ENCODE measurements at regions of chr19 and their contacts with region 1.

Region 1: DNA sequence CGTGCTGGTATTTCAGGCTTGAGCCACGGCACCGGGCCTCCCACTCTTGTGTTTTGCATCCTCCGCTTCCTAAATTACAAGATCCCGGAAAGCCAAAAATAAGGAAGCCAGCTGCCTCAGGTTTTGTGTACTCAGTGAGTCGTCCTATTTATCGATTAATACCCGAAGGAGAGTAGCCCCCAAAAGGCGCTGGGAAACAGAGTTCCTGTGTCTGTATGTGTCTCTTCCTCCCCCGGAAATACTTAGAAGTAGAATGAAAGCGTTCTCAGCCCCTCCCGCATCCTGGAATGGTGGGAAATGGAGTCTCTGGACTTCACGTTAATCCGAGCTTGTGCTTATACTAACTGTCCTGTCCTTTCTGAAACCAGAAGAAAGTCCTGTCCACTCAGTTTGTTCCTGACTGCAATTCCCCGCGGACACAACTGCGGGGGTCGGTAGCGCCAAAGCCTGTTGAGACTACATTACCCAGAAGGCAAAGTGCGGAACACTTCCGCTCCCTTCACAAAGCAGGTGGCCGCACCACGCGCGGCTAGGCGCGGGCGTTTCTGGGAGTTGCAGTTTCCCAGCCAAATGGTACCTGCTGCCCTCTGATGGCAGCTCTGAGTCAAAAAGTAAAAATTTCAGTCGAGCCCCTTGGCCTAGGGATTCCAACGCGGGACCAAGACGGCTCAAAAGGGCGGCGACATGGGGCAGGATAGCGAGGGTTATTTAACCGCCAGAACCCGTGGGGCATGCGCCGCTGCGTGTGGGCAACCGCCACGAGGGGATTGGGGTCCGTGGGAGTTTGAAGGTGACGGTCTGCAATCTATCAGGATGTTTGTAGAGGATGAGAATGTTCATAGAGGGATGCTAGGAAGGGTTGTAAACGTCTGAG is 2.2 kb upstream of the GSK3A start:
- DNase-seq: peak; percentile 95
- H3K4me3 Mint-ChIP-seq: peak overlapping the region; percentile 83
- H3K27ac Mint-ChIP-seq: peak overlapping the region; percentile 90
- H3K4me1 Mint-ChIP-seq: peaks cover 49% of the 10 kb centered on the region
- H3K27me3 Mint-ChIP-seq: no peaks in the 10 kb centered on the region

Region 2: GRCh38 chr19:42052241-42052863 is 192.2 kb before region 1 on chr19:
- CTCF ChIA-PET with region 1: no interaction called
- POLR2A ChIA-PET with region 1: no interaction called
- DNase-seq: no peak
- H3K4me3 Mint-ChIP-seq: no peak overlapping the region
- H3K27ac Mint-ChIP-seq: no peak overlapping the region
- H3K4me1 Mint-ChIP-seq: peaks cover 19% of the 10 kb centered on the region
- H3K27me3 Mint-ChIP-seq: peaks cover 2% of the 10 kb centered on the region

Region 3: DNA sequence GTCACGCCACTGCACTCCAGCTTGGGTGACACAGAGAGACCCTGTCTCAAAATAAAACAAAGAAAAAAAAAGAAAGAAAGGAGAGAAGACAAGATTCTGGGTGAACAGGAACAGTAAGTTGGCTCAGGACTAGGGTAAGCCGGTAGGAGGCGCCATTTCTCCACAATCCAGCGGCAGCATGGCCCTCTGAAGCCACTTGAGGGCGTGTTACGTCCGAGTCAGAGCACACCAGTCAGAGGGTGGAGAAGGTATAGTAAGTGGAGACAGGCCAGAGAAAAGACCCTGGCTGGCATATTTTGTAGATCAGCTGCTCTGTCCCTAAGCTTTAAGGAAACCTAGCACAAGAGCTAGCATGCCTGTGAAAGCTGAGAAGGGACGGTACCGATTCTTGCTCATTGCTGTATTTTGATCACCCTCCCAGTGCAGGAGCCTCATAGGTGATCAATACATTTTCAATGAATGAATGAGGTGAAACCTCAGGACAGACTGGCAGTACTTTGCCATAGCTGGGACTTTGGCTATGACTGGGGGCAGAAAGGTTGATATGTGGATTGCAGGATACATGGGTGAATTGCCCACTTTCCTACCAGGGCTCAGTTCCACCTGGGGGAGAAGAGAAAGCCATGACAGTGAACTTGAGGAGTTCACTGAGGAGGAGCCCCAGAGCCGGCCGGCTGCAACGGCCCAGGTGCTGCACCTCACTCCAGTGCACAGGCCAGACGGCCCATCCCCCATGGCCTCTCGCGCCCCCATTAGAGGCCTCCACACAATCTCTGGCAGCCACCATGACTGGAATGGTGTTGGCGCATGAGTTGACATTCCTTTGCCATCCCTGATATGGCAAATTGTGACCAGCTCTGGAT is 135.8 kb before region 1 on chr19:
- CTCF ChIA-PET with region 1: interaction called, 14 read pairs
- POLR2A ChIA-PET with region 1: interaction called, 3 read pairs
- DNase-seq: peak; percentile 92
- H3K4me3 Mint-ChIP-seq: no peak overlapping the region
- H3K27ac Mint-ChIP-seq: no peak overlapping the region
- H3K4me1 Mint-ChIP-seq: peaks cover 34% of the 10 kb centered on the region
- H3K27me3 Mint-ChIP-seq: no peaks in the 10 kb centered on the region

Region 4: GRCh38 chr19:42199440-42200115 is 45.0 kb before region 1 on chr19:
- CTCF ChIA-PET with region 1: interaction called, 9 read pairs
- POLR2A ChIA-PET with region 1: interaction called, 33 read pairs
- DNase-seq: peak; percentile 91
- H3K4me3 Mint-ChIP-seq: peak overlapping the region; percentile 72
- H3K27ac Mint-ChIP-seq: peak overlapping the region; percentile 98
- H3K4me1 Mint-ChIP-seq: peaks cover 86% of the 10 kb centered on the region
- H3K27me3 Mint-ChIP-seq: no peaks in the 10 kb centered on the region

Region 5: DNA sequence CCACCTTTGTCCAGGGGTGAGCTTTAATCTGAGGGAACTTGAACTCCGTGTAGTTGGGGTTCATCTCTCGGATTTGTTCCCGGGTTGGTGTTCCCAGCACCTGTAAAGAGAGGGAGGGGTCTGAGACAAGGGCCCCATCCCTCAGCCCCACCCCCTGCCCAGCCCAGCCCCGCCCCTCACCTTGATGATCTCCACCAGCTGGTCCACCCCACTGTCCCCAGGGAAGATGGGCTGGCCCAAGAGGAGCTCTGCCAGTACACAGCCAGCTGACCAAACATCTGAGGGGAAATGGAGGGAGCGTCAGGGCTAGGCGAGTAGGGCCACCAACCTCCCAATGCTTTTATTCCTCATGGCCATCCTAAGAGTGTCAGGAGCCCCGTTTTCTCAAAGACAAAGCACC is 11.5 kb before region 1 on chr19:
- CTCF ChIA-PET with region 1: interaction called, 6 read pairs
- POLR2A ChIA-PET with region 1: interaction called, 17 read pairs
- DNase-seq: no peak
- H3K4me3 Mint-ChIP-seq: no peak overlapping the region
- H3K27ac Mint-ChIP-seq: no peak overlapping the region
- H3K4me1 Mint-ChIP-seq: peaks cover 12% of the 10 kb centered on the region
- H3K27me3 Mint-ChIP-seq: no peaks in the 10 kb centered on the region

Region 6: DNA sequence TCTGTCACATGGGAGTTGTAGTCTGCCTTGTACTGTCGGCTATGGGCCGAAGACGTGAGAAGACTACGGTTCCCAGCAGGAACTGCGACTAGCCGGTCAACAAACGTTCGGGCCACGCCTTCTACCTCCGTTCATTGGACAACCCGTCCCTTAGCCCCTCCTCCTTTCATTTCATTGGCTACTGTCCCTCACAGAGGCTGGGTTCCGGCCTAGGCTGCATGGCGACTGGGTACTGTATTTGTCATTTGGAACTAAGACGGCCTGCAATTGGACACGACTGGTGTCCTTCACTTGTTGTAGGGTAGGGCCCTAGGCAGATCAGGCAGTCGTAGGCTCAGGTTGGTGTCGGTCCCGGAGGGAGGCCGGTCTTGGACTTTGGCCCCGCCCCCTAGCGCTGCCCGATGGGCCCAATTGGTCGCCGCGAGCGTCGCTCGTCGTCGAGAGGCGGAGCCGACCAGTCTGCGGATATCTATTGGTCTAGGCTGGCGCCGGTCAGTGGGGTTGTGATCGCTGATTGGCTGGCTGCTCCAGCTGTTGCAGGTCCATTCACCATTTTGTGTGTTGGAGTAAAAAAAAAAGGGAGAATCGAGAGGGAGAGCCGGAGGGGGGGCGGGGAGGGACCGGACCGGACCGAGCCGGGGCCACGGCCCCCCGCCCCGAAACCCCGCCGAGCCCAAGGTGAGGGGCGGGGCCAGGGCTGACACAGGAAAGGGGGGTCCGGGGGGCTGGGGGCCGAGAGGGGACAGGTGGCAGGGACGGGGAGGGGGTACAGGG is 24.3 kb after region 1 on chr19 and contains the start of gene CIC:
- CTCF ChIA-PET with region 1: interaction called, 10 read pairs
- POLR2A ChIA-PET with region 1: interaction called, 106 read pairs
- DNase-seq: peak; percentile 99
- H3K4me3 Mint-ChIP-seq: no peak within 1 kb of the TSS
- H3K27ac Mint-ChIP-seq: peak within 1 kb of the TSS; percentile 99
- H3K4me1 Mint-ChIP-seq: peaks cover 32% of the 10 kb centered on the region
- H3K27me3 Mint-ChIP-seq: no peaks in the 10 kb centered on the region
- total RNA-seq, gene CIC: 86.5 to 88.8 TPM

Region 7: DNA sequence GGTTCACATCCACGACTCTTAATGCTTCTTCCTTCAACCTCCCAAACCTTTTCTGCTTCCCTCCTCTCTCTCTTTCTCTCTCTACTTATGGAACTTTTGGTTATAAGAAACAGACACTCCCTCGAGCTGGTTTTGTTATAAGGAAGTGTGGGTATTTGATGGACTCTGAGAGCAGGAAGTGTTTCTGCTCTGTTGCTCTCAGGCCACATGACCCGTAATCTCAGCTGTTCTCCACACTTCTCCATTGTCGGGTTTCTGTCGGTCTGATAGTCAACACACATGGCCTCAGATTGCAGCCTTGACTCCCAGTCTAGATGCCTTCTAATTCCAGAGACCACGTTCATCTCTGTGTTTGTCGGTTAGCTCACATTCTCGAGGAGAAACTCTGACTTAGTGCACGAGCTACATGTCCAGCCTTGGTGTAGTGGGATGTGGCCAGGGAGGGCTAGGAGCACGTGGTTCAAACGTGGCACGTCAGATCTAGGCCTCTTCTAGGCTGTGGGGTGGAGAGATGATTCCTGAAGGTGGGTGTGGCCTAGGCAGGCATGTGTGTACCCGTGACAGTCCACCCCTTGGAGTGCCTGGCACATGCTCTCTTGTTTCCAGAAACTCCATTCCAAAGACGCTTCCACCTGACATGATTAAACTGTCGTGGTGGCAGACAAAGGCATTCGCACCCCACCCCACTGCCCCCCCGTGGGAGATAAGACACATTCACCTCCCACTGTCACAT is 119.2 kb after region 1 on chr19:
- CTCF ChIA-PET with region 1: no interaction called
- POLR2A ChIA-PET with region 1: no interaction called
- DNase-seq: no peak
- H3K4me3 Mint-ChIP-seq: no peak overlapping the region
- H3K27ac Mint-ChIP-seq: no peak overlapping the region
- H3K4me1 Mint-ChIP-seq: no peaks in the 10 kb centered on the region
- H3K27me3 Mint-ChIP-seq: no peaks in the 10 kb centered on the region

Region 8: DNA sequence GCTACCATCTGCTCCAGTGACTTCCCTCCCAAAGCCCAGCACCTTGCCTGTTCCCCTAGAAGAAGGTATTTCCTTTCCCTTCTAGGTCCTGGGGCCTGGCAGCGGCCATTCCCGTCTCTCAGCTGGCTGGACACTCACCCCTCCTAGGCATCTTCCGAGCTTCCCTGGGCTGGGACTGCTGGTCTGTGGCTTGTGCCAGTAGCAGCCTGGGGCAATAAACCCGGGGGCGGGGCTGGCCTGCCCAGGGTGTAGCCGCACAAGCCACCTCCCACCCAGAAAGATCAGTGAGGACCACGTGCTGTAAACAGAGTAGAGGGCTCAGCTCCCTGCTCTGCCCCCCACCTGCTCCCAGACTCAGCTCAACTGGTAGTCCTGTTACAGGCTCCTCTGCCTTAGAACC is 167.6 kb after region 1 on chr19:
- CTCF ChIA-PET with region 1: no interaction called
- POLR2A ChIA-PET with region 1: no interaction called
- DNase-seq: no peak
- H3K4me3 Mint-ChIP-seq: no peak overlapping the region
- H3K27ac Mint-ChIP-seq: no peak overlapping the region
- H3K4me1 Mint-ChIP-seq: peaks cover 3% of the 10 kb centered on the region
- H3K27me3 Mint-ChIP-seq: no peaks in the 10 kb centered on the region

Measured in activated CD4-positive, alpha-beta memory T cell treated with anti-CD3 and anti-CD28 coated beads, Interleukin-2, amount 10 ng/mL, durations not matched to agents 7 days and 5 days (primary cell).